Posterior vena cava (tissue), 2 donors: ENCODE measurements at regions of chr18 and their contacts with region 1.

Region 1: DNA sequence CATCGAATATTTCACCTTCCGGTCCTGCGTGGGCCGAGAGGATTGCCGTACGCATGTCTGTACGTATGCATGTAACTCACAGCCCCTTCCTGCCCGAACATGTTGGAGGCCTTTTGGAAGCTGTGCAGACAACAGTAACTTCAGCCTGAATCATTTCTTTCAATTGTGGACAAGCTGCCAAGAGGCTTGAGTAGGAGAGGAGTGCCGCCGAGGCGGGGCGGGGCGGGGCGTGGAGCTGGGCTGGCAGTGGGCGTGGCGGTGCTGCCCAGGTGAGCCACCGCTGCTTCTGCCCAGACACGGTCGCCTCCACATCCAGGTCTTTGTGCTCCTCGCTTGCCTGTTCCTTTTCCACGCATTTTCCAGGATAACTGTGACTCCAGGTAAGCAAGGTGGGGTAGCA is at the start of gene SERPINB5:
- DNase-seq: no peak
- total RNA-seq, gene SERPINB5: not detected

Region 2: GRCh38 chr18:62026586-62026985 is 1450.1 kb before region 1 on chr18:
- intact Hi-C with region 1: loop called in 1 of 2 experiments (anchors 5 kb)
- DNase-seq: no peak

Region 3: DNA sequence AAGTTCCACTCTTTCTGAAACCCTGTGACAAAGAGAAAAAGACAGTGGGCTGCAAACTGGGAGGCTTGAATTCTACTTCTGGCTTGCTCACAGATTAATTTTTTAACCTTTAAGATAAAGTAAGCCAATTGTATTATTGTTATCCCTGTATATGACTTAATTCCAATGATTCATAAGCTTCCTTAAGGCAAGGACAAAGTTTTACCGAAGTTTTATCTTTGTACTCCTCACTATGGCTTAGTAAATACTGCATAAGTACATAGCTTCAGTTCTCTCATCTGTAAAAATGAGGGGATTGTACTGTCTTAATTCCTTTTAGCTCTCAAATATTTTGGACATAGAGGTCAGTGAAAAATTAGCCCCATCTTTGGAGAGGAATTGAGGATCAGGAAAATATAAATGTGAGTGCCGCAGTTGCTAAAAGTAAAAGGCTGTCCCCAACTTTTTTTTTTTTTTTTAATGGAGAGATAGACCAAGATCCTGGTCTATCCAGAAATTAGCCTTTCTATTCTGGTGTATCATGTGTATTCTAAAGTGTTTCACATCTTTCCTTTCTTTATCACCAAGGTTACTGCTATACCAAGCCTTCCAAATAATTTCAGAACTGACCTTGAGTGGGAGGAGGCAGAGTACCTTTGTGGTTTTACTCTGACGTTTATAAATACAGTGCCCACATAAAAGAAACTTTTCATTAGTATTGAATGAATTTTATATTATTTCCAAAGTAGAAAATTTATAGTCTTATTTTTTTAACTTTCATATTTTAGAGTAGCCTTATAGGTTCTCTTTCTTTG is 1276.3 kb before region 1 on chr18:
- intact Hi-C with region 1: loop called in 1 of 2 experiments (anchors 5 kb)
- DNase-seq: no peak